Activated T-helper 1 cell treated with anti-CD3 and anti-CD28 coated beads, Interleukin-12 subunit alpha, Interleukin-12 subunit beta, Interleukin-2, Interleukin-4 antibody, amounts not matched to agents 30 ng/mL and 10 ng/mL and 1 ng/mL, durations not matched to agents 14 hours and 24 hours and 36 hours (primary cell): ENCODE measurements at regions of chr19 and their contacts with region 1.

Region 1: GRCh38 chr19:35213663-35214632 is 14.6 kb downstream of the FAM187B start:
- DNase-seq: peak; percentile 42
- H3K4me3 Mint-ChIP-seq: peak overlapping the region; percentile 2
- H3K27ac Mint-ChIP-seq: peak overlapping the region; percentile 75
- H3K4me1 Mint-ChIP-seq: peaks cover 57% of the 10 kb centered on the region
- H3K27me3 Mint-ChIP-seq: no peaks in the 10 kb centered on the region

Region 2: DNA sequence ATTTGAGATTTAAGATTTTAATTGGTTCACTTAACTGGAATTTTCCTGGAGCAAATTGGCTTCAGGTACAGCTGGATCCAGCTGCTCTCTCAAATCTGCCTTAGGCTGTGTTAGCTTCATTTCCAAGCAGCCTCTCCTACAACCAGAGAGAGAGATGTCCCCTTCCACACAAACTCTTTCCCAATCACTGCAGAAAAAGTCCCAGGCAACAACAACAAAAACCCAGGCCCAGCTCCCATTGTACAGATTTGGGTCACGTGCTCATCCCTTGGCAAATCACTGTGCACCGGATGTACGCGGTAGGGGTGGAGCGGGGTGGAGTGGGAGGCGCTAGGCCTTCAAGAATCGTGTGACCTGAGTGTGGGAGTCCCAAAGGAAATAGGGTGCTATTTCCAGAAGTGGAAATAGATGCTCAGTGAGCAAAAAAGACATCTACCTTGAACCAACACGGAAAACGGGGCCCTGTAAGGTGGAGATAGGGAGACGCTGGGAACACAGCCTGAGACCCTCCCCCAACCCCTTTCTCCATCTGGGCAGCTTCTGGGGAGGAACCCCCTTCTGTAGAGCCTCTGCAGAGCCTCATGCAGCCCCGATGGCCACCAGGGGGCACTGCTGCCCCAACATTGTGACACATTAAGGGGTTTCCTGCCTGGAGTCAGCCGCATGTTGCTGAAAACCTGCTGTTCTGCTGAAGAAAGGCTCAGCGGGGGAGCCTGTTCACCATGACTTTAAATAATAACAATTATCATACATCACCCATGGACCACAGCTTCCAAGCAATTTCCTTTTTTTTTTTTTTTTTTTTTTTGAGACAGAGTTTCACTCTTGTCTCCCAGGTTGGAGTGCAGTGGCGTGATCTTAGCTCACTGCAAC is 147.0 kb before region 1 on chr19:
- intact Hi-C with region 1: loop called (anchors 1 kb)
- DNase-seq: peak; percentile 79
- H3K4me3 Mint-ChIP-seq: peak overlapping the region; percentile 42
- H3K27ac Mint-ChIP-seq: peak overlapping the region; percentile 57
- H3K4me1 Mint-ChIP-seq: peaks cover 16% of the 10 kb centered on the region
- H3K27me3 Mint-ChIP-seq: peaks cover 6% of the 10 kb centered on the region

Region 3: GRCh38 chr19:35114353-35115176 is 99.4 kb before region 1 on chr19:
- intact Hi-C with region 1: loop called (anchors 1 kb)
- DNase-seq: peak; percentile 38
- H3K4me3 Mint-ChIP-seq: no peak overlapping the region
- H3K27ac Mint-ChIP-seq: no peak overlapping the region
- H3K4me1 Mint-ChIP-seq: peaks cover 6% of the 10 kb centered on the region
- H3K27me3 Mint-ChIP-seq: peaks cover 7% of the 10 kb centered on the region

Region 4: DNA sequence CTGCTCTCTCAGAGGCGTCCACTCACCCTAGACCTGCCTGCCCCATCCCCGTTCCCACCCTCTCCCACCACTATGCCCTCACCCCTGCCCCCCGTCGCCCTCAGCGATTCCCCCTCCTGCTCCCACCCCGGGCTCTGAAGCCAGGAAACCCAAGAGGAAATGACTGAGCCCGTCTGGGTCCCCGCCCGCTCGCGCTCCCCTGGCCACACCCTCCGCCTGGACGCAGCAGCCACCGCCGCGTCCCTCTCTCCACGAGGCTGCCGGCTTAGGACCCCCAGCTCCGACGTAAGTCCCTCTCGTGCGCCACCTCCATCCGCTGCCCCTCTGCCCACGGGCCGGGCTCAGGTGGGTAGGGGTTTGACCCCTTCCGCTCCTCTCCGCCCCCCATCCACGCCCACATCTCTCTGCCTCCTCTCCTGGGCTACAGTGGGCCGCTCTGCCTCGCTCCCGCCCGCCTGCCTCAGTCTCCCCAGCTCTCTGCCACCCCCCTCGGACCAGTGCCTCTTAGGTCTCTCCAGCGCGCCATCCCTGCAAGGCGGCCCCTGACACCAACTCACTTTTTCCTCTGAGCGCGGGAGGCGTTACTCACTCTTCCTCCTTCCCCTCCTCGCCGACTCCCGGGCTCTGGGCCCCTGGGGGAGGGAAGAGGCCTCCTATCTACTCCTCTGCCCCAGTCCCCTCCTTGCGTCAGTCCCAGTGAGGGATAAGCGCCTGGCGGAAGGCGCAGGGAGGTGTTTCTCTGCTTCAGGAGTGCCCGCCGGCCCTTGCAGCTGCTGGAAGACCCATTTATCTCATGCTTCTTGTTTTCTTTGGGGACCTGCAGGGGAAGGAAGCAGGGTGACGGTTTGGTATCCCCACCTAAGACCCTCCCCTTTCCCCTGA is 59.2 kb before region 1 on chr19 and contains the start of gene FXYD5:
- intact Hi-C with region 1: loop called (anchors 1 kb)
- DNase-seq: peak; percentile 60
- H3K4me3 Mint-ChIP-seq: peak within 1 kb of the TSS; percentile 100
- H3K27ac Mint-ChIP-seq: peak within 1 kb of the TSS; percentile 100
- H3K4me1 Mint-ChIP-seq: peaks cover 54% of the 10 kb centered on the region
- H3K27me3 Mint-ChIP-seq: peaks cover 7% of the 10 kb centered on the region
- total RNA-seq, gene FXYD5: 299 and 309 TPM in 2 replicates

Region 5: DNA sequence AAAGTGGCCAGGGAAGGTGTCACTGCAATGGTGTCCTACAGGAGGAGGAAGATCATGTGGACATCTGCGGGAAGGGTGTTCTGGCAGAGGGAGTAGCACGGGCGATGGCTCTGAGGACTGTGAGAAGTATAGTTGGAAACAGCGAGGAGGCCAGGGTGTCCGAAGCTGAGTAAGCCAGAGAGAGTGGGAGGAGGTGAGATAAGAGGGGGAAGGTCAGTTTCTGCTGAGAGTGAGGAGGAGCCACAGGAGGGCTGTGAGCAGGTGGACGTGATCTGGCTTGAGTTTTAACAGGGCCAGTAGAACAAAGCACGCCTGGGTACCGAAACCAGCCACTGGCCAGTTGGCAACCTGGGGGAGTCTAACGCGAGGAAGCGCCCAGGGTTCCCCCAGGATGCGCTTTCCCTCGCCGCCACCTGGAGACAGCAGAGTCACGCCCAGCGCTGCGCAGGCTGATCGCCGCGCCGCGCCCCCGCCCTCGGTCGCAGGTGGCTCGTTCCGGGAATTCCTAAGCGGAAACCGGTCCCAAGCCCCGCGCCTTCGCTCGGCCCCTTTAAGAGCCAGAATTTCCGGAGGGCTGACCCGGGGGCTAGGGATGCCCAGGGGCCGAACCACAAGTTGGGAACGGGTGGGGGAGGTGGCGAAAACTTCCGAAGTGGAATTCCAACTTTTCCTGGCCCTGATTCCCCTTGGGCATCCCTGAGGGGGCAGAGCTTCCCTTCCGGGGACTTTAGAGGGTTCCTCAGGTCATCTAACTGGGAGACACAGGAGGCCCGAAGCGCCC is 33.8 kb after region 1 on chr19:
- intact Hi-C with region 1: loop called (anchors 5 kb)
- DNase-seq: no peak
- H3K4me3 Mint-ChIP-seq: peak overlapping the region; percentile 85
- H3K27ac Mint-ChIP-seq: peak overlapping the region; percentile 66
- H3K4me1 Mint-ChIP-seq: peaks cover 18% of the 10 kb centered on the region
- H3K27me3 Mint-ChIP-seq: peaks cover 27% of the 10 kb centered on the region